ENCODE measurements at regions of chr19 and their contacts with region 1.

Region 1: GRCh38 chr19:52048555-52049501 is at the start of gene ZNF432:
- DNase-seq: peak; percentile 90
- H3K4me3 Mint-ChIP-seq: peak within 1 kb of the TSS; percentile 74
- H3K27ac Mint-ChIP-seq: peak within 1 kb of the TSS; percentile 76
- H3K4me1 Mint-ChIP-seq: no peaks in the 10 kb centered on the region
- H3K27me3 Mint-ChIP-seq: no peaks in the 10 kb centered on the region
- CTCF ChIP-seq: no peak
- total RNA-seq, gene ZNF432: 16.0 TPM in 2 replicates

Region 2: GRCh38 chr19:52028027-52028779 is 20.6 kb before region 1 on chr19 and contains the start of gene ZNF614:
- CTCF ChIA-PET with region 1: no interaction called
- intact Hi-C with region 1: loop called (anchors 2 kb)
- DNase-seq: peak; percentile 91
- H3K4me3 Mint-ChIP-seq: peak within 1 kb of the TSS; percentile 79
- H3K27ac Mint-ChIP-seq: peak within 1 kb of the TSS; percentile 78
- H3K4me1 Mint-ChIP-seq: peaks cover 6% of the 10 kb centered on the region
- H3K27me3 Mint-ChIP-seq: no peaks in the 10 kb centered on the region
- CTCF ChIP-seq: no peak
- total RNA-seq, gene ZNF614: 9.5 and 10.3 TPM in 2 replicates

Region 3: GRCh38 chr19:52095172-52096014 is 46.6 kb after region 1 on chr19 and contains the start of gene ZNF841:
- CTCF ChIA-PET with region 1: no interaction called
- intact Hi-C with region 1: loop called (anchors 2 kb)
- DNase-seq: peak; percentile 99
- H3K4me3 Mint-ChIP-seq: peak within 1 kb of the TSS; percentile 91
- H3K27ac Mint-ChIP-seq: peak within 1 kb of the TSS; percentile 88
- H3K4me1 Mint-ChIP-seq: peaks cover 13% of the 10 kb centered on the region
- H3K27me3 Mint-ChIP-seq: no peaks in the 10 kb centered on the region
- CTCF ChIP-seq: no peak
- total RNA-seq, gene ZNF841: 37.6 and 39.8 TPM in 2 replicates

Measured in Calu3 (cell line).